Breast epithelium (tissue), 4 donors: ENCODE measurements at regions of chr2 and their contacts with region 1.

Region 1: DNA sequence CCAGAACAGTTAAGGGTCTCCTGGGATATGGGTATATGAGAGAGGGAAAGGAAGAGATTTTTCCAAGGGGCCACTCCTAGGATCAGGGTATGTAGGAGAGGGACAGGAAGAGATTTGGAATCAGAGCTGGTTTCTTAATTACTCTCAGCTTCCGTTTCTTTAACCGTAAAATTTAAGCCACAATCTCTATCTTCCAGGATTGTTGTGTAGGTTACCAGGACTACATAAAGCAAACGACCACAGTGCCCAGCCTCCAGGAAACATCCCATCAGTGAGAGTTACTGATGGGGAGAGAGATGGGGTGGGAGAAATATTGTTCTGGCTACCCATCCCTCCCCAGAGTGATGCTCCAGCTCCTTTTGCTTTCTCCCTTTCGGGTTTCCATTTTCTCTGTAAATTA is 114.6 kb upstream of the THUMPD2 start:
- DNase-seq: no peak
- H3K4me3 ChIP-seq: no peak overlapping the region
- H3K27ac ChIP-seq: no peak overlapping the region
- H3K4me1 ChIP-seq: no peaks in the 10 kb centered on the region
- H3K27me3 ChIP-seq: no peaks in the 10 kb centered on the region
- CTCF ChIP-seq: no peak
- POLR2A ChIP-seq: no peak

Region 2: GRCh38 chr2:40844353-40845277 is 951.0 kb after region 1 on chr2:
- intact Hi-C with region 1: loop called (anchors 5 kb)
- DNase-seq: no peak
- H3K4me3 ChIP-seq: no peak overlapping the region
- H3K27ac ChIP-seq: no peak overlapping the region
- H3K4me1 ChIP-seq: no peaks in the 10 kb centered on the region
- H3K27me3 ChIP-seq: no peaks in the 10 kb centered on the region
- CTCF ChIP-seq: no peak
- POLR2A ChIP-seq: no peak